ENCODE measurements at regions of chr9 and their contacts with region 1.

Region 1: GRCh38 chr9:127187231-127187956 is 65.0 kb upstream of the ANGPTL2 start:
- DNase-seq: peak in 3 of 5 donors; percentile 62 to 83 (median 78)
- ATAC-seq: peak in 3 of 4 donors; percentile 42 to 63 (median 59)
- H3K4me3 ChIP-seq: no peak overlapping the region
- H3K27ac ChIP-seq: peak overlapping the region; percentile 57 to 96 (median 88)
- H3K4me1 ChIP-seq: peaks cover 2 to 61% (median 46%) of the 10 kb centered on the region in 12 donors
- H3K27me3 ChIP-seq: no peaks in the 10 kb centered on the region
- CTCF ChIP-seq: no peak
- POLR2A ChIP-seq: no peak

Region 2: DNA sequence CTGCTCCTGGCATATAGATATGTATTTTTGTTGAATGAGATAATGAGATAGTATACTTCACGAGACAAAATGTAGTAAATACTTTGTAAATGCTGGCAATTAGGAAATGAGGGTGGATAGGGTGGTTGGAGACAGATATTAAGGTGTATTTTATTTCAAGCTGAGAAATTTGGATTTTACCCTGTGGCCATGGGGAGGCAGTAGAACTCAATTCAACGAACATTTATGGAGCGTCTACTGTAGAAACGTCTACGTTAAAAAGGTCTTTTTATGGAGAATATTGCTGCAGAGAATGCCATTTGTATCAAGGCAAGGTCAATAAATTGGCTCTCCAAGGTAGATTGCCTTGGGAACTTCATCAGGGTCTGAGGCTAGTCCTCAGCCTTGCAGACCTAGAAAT is 294.3 kb before region 1 on chr9:
- intact Hi-C with region 1: no loop called
- DNase-seq: no peak
- ATAC-seq: no peak
- H3K4me3 ChIP-seq: no peak overlapping the region
- H3K27ac ChIP-seq: no peak overlapping the region
- H3K4me1 ChIP-seq: no peaks in the 10 kb centered on the region
- H3K27me3 ChIP-seq: no peaks in the 10 kb centered on the region
- CTCF ChIP-seq: peak in 4 of 12 donors; percentile 19 to 34 (median 23)
- POLR2A ChIP-seq: no peak

Region 3: GRCh38 chr9:126956917-126957686 is 230.3 kb before region 1 on chr9:
- intact Hi-C with region 1: loop called in 1 of 10 experiments (anchors 5 kb)
- DNase-seq: peak in 2 of 5 donors; percentile 35 to 45
- ATAC-seq: peak; percentile 58 to 67 (median 60)
- H3K4me3 ChIP-seq: no peak overlapping the region
- H3K27ac ChIP-seq: peak overlapping the region; percentile 63 to 92 (median 84)
- H3K4me1 ChIP-seq: peaks cover 0 to 56% (median 25%) of the 10 kb centered on the region in 12 donors
- H3K27me3 ChIP-seq: no peaks in the 10 kb centered on the region
- CTCF ChIP-seq: no peak
- POLR2A ChIP-seq: no peak

Region 4: GRCh38 chr9:127130661-127131538 is 56.5 kb before region 1 on chr9:
- intact Hi-C with region 1: loop called in 1 of 10 experiments (anchors 5 kb)
- DNase-seq: peak in 2 of 5 donors; percentile 67 to 70
- ATAC-seq: peak in 3 of 4 donors; percentile 38 to 64 (median 60)
- H3K4me3 ChIP-seq: no peak overlapping the region
- H3K27ac ChIP-seq: peak overlapping the region in 11 of 12 donors; percentile 32 to 96 (median 77)
- H3K4me1 ChIP-seq: peaks cover 0 to 75% (median 60%) of the 10 kb centered on the region in 12 donors
- H3K27me3 ChIP-seq: no peaks in the 10 kb centered on the region
- CTCF ChIP-seq: no peak
- POLR2A ChIP-seq: no peak

Region 5: DNA sequence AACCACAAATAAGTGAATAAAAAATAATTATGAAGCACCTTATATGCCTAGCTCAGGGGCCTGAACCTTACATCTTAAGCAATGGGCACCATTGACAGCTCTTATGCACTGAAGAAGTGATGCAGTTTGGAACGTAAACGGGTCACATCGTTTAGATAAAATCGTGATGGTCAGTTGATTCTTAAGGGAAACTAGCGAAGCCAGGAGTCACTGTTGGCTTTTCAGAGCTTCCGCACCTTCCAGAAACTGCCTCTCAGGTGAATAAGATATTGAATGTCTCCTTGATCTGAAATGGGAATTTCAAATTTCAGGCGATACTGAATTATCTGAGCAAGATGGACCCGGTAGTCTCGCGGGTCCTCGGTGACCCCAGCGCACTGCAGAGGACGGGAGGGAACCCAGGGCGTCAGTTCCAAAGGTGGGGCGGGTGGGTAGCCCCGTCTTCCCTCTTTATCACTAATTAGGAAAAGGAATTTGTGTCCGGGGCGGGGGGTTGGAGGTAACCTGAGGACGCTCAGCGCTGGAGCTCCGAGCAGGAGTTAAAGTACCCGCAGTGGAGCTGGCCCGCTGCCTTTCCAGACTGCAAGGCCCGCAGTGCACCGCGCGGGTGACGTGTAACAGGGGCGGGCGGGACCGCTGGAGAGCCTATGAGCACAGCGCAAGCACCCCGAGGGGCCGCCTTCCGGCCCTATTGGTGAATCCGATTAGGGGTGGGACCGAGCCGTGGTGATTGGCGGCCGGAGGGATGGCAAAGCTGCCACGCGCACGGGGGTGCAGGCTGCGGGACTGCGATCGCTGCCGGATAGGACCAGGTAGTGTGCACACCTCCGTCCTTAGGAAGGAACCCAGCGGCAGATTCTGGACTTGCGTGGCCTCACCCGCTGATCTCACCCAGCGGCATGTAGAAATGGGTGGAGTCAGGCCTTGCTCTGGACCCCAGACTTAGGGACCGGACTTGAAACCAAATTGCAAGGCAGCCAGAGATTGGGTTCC is 57.5 kb after region 1 on chr9:
- intact Hi-C with region 1: no loop called
- DNase-seq: peak; percentile 98 to 99 (median 98)
- ATAC-seq: peak; percentile 100
- H3K4me3 ChIP-seq: peak overlapping the region; percentile 42 to 72 (median 63)
- H3K27ac ChIP-seq: peak overlapping the region in 10 of 12 donors; percentile 52 to 88 (median 80)
- H3K4me1 ChIP-seq: peaks cover 0 to 15% (median 7%) of the 10 kb centered on the region in 12 donors
- H3K27me3 ChIP-seq: no peaks in the 10 kb centered on the region
- CTCF ChIP-seq: peak in 1 of 12 donors; percentile 5
- POLR2A ChIP-seq: peak in 1 of 2 donors; percentile 79